A549 (cell line): ENCODE measurements at regions of chr5 and their contacts with region 1.

Region 1: DNA sequence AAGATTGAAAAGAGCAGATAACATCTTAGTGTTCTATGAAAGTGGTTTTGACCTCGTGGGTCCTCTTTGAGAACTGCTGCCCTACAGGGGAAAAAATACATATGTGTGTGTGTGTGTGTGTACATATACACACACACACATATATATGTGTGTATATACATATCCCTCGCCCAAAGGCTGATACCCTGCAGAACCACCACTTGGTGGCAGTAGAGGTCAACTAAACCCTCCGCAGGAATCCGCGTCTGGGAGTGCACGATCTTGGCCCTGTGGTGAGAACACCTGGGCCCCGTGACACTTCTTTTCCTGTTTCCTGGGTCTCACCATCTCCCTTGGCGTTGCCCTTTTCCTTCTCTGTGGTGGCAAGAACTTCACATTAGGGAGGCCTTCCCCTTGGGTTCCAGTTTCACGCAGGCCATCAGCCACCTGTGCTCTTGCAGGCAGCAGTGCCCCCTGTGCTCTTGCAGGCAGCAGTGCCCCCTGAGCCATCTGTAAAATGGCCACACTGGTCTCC is 8.2 kb downstream of the IL9 start:
- DNase-seq: peak; percentile 74 to 78
- ATAC-seq: peak; percentile 92 to 97
- H3K4me3 ChIP-seq: no peak overlapping the region
- H3K27ac ChIP-seq: peak overlapping the region; percentile 9 to 65; a peak in 4 of 6 replicates
- H3K4me1 ChIP-seq: peaks cover 22% of the 10 kb centered on the region
- CTCF ChIP-seq: peak; percentile 98
- EP300 ChIP-seq: no peak
- POLR2A ChIP-seq: no peak
- RAD21 ChIP-seq: peak; percentile 97 to 98

Region 2: DNA sequence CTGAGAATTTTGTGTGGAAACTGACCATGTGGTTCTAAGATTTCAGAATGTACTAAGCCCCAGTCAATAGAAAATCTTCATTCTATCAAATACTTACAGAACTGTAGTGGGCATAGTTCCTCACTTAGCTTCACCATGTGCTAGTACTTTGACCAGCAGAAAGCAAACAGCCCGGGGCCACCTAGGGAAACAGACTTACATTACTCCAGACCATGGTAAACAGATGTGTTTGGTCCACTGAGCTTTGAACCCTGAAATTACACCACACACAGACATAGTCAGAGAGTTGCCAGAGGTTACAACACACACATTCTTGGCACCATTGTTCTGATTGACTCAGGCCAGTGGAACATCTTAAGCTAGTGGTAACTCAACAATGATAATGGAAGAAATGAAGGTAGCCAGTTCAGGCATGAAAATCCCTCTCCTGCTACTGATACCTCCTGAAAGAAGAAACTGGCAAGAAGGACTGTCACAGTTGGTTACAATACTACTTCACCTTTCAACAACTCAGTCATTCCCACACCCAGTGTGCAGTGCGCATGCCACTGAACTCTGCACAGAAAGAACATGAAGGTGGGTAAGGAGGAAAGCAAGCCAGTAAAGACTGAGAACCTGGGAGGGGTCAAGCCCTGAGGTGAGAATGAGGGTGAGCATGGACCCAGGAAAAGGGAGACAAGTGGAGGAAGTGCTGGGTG is 86.1 kb after region 1 on chr5:
- CTCF ChIA-PET with region 1: no interaction called
- POLR2A ChIA-PET with region 1: no interaction called
- DNase-seq: peak in 1 of 2 experiments; percentile 83
- ATAC-seq: peak; percentile 47 to 49; a peak in 4 of 6 replicates
- H3K4me3 ChIP-seq: no peak overlapping the region
- H3K27ac ChIP-seq: peak overlapping the region; percentile 85 to 86
- H3K4me1 ChIP-seq: peaks cover 41% of the 10 kb centered on the region
- CTCF ChIP-seq: no peak
- EP300 ChIP-seq: peak; percentile 79 to 80; a peak in 4 of 5 replicates
- POLR2A ChIP-seq: no peak
- RAD21 ChIP-seq: peak in 1 of 2 experiments; percentile 21; a peak in 1 of 5 replicates

Region 3: GRCh38 chr5:136075466-136075891 is 188.1 kb after region 1 on chr5:
- CTCF ChIA-PET with region 1: interaction called, 74 read pairs
- POLR2A ChIA-PET with region 1: no interaction called
- DNase-seq: no peak
- ATAC-seq: peak in 1 of 2 experiments; percentile 10; a peak in 3 of 6 replicates
- H3K4me3 ChIP-seq: no peak overlapping the region
- H3K27ac ChIP-seq: no peak overlapping the region; a peak in 1 of 6 replicates
- H3K4me1 ChIP-seq: peaks cover 6% of the 10 kb centered on the region; the same call in 1 of the 3 replicates
- CTCF ChIP-seq: no peak
- EP300 ChIP-seq: no peak
- POLR2A ChIP-seq: no peak
- RAD21 ChIP-seq: no peak